Mammary epithelial cell (primary cell): ENCODE measurements at regions of chr11 and their contacts with region 1.

Region 1: GRCh38 chr11:9739123-9739894 is 75.4 kb downstream of the SWAP70 start:
- DNase-seq: no peak
- H3K4me3 ChIP-seq: no peak overlapping the region
- H3K27ac ChIP-seq: no peak overlapping the region
- H3K4me1 ChIP-seq: no peaks in the 10 kb centered on the region
- H3K27me3 ChIP-seq: no peaks in the 10 kb centered on the region
- CTCF ChIP-seq: no peak

Region 2: GRCh38 chr11:9675691-9676090 is 63.6 kb before region 1 on chr11:
- CTCF ChIA-PET with region 1: no interaction called
- dilution Hi-C with region 1: loop called (anchors 5 kb)
- in situ Hi-C with region 1: no loop called
- intact Hi-C with region 1: no loop called
- DNase-seq: no peak
- H3K4me3 ChIP-seq: no peak overlapping the region
- H3K27ac ChIP-seq: no peak overlapping the region
- H3K4me1 ChIP-seq: no peaks in the 10 kb centered on the region
- H3K27me3 ChIP-seq: no peaks in the 10 kb centered on the region
- CTCF ChIP-seq: no peak

Region 3: DNA sequence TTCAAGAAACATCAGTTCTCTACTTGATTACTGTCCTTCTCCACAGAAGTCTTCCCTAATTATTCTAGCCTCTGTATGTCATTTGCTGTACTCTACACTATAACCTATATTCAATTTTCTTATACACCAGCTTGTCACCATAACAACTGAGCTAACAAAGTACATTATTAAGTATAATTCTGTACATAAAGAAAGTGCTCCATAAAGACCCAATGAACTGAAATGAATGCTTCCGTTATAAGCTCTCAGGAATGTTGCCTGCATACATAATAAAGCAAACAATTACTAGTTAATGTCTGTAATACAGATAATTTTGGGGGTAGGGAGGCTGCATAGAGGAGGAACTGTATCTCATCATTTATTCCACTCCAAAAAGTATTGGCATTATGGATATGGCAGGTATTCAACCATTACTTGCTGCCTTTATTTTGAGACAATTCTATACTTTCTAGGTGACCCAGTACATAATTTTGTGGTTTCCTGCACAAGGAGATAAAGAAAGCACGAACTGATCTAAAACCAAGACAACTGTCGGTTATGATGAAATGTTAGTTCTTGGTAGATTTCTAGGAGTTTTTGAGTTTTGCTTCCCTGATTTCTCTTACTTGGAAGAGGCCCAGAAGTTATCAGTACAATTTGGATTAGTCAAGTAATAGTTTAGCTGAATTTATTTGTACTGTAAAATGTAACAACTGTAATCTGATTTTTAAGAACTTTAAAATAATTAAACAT is 352.2 kb after region 1 on chr11:
- CTCF ChIA-PET with region 1: no interaction called
- dilution Hi-C with region 1: no loop called
- in situ Hi-C with region 1: no loop called
- intact Hi-C with region 1: no loop called
- DNase-seq: no peak
- H3K4me3 ChIP-seq: no peak overlapping the region
- H3K27ac ChIP-seq: no peak overlapping the region
- H3K4me1 ChIP-seq: no peaks in the 10 kb centered on the region
- H3K27me3 ChIP-seq: no peaks in the 10 kb centered on the region
- CTCF ChIP-seq: no peak